IMR-90 (cell line): ENCODE measurements at regions of chr1 and their contacts with region 1.

Region 1: GRCh38 chr1:3883194-3883925 is 16.7 kb downstream of the C1orf174 start:
- DNase-seq: no peak
- ATAC-seq: no peak
- H3K4me3 ChIP-seq: no peak overlapping the region
- H3K27ac ChIP-seq: no peak overlapping the region
- H3K4me1 ChIP-seq: no peaks in the 10 kb centered on the region
- H3K27me3 ChIP-seq: no peaks in the 10 kb centered on the region
- CTCF ChIP-seq: no peak
- POLR2A ChIP-seq: no peak
- RAD21 ChIP-seq: no peak

Region 2: GRCh38 chr1:3618881-3619671 is 264.3 kb before region 1 on chr1:
- CTCF ChIA-PET with region 1: no interaction called
- POLR2A ChIA-PET with region 1: no interaction called
- dilution Hi-C with region 1: no loop called
- in situ Hi-C with region 1: no loop called
- intact Hi-C with region 1: no loop called
- DNase-seq: peak; percentile 80
- ATAC-seq: peak; percentile 89
- H3K4me3 ChIP-seq: no peak overlapping the region
- H3K27ac ChIP-seq: no peak overlapping the region
- H3K4me1 ChIP-seq: peaks cover 11% of the 10 kb centered on the region
- H3K27me3 ChIP-seq: no peaks in the 10 kb centered on the region
- CTCF ChIP-seq: peak; percentile 92
- POLR2A ChIP-seq: no peak
- RAD21 ChIP-seq: peak; percentile 72

Region 3: DNA sequence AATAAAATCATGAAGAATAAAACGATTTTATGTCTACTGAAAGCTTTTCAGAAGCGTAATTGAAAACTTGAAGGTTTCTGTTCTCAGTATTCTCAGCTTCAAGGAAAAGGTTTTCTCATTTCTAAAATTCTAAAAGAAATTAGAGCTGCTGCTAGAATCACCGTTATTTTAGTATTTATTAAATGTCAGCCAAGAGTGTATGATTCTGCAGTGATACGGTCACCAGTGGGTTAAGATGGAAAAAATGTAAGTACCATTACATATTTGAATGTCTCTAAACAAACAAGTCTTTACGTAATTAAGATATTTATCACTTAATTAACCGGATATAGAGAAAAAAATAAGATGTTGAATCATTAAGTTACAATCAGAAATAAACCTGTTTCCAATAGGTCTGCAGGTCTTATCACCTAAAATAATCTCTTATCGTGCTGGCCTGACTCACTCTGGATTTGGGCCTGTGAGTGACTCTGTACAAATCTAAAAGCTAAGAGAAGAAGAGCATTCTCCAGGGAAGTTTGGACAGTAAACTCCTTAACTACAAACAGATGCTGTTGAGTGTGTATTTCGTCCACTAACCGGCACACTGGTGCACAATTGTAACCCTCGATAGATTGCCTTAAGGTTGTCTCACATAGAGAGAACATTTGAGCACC is 51.8 kb before region 1 on chr1:
- CTCF ChIA-PET with region 1: no interaction called
- POLR2A ChIA-PET with region 1: no interaction called
- dilution Hi-C with region 1: no loop called
- in situ Hi-C with region 1: loop called (anchors 5 kb)
- intact Hi-C with region 1: no loop called
- DNase-seq: no peak
- ATAC-seq: no peak
- H3K4me3 ChIP-seq: no peak overlapping the region
- H3K27ac ChIP-seq: no peak overlapping the region
- H3K4me1 ChIP-seq: no peaks in the 10 kb centered on the region
- H3K27me3 ChIP-seq: no peaks in the 10 kb centered on the region
- CTCF ChIP-seq: no peak
- POLR2A ChIP-seq: no peak
- RAD21 ChIP-seq: no peak

Region 4: GRCh38 chr1:3928586-3928985 is 45.2 kb after region 1 on chr1:
- CTCF ChIA-PET with region 1: no interaction called
- POLR2A ChIA-PET with region 1: no interaction called
- dilution Hi-C with region 1: no loop called
- in situ Hi-C with region 1: no loop called
- intact Hi-C with region 1: no loop called
- DNase-seq: no peak
- ATAC-seq: no peak
- H3K4me3 ChIP-seq: no peak overlapping the region
- H3K27ac ChIP-seq: no peak overlapping the region
- H3K4me1 ChIP-seq: no peaks in the 10 kb centered on the region
- H3K27me3 ChIP-seq: no peaks in the 10 kb centered on the region
- CTCF ChIP-seq: no peak
- POLR2A ChIP-seq: no peak
- RAD21 ChIP-seq: no peak